ENCODE measurements at regions of chr18 and their contacts with region 1.

Region 1: GRCh38 chr18:33201509-33201926 is 239.0 kb downstream of the CCDC178 start:
- H3K4me3 ChIP-seq: no peak overlapping the region
- H3K27ac ChIP-seq: no peak overlapping the region
- H3K4me1 ChIP-seq: no peaks in the 10 kb centered on the region
- CTCF ChIP-seq: no peak; the same call in 1 of the 2 replicates

Region 2: GRCh38 chr18:33169218-33169617 is 32.3 kb before region 1 on chr18:
- CTCF ChIA-PET with region 1: interaction called, 11 read pairs
- POLR2A ChIA-PET with region 1: no interaction called
- H3K4me3 ChIP-seq: no peak overlapping the region
- H3K27ac ChIP-seq: no peak overlapping the region
- H3K4me1 ChIP-seq: no peaks in the 10 kb centered on the region
- CTCF ChIP-seq: no peak

Region 3: DNA sequence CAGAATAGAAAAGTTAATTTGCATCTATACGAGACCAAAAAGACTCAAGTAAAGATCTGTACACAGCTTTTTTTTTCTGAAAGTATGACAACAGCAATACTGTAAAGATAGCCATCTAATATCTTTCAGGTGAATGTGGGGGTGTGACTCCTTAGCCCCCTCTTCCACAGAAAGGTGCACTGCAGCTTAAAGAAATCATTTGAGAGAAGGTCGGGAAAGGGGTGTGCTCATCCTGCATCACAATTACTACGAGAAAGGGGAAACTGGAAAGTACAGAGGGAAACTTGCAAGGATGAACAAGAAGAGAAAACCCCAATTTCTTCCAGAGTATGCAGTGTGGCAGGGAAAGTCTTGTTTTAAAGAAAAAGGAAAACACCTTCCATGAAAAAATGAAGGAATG is 16.6 kb before region 1 on chr18:
- CTCF ChIA-PET with region 1: interaction called, 12 read pairs
- POLR2A ChIA-PET with region 1: no interaction called
- H3K4me3 ChIP-seq: no peak overlapping the region
- H3K27ac ChIP-seq: no peak overlapping the region
- H3K4me1 ChIP-seq: no peaks in the 10 kb centered on the region
- CTCF ChIP-seq: no peak